HAP-1 (cell line): ENCODE measurements at regions of chr18 and their contacts with region 1.

Region 1: DNA sequence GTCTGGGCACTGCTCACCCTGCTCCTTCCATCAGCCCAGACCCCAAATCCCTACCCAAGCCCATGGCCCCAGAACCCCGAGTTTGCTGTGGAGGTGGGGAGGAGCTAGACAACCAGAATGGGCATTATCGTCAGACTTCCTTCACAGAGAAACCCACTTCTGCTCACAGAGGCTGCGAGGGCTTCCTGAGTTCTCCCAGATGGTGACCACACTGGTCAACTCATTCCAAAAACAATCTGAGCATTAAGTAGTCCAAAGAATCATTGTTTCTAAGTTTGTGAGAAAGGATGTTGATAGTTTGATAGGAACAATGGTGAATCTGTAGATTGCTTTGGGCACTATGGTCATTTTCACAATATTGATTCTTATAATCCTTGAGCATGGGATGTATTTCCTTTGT is 60.2 kb downstream of the LRRC30 start:
- DNase-seq: no peak
- H3K4me3 ChIP-seq: no peak overlapping the region
- H3K4me1 ChIP-seq: no peaks in the 10 kb centered on the region
- H3K27me3 ChIP-seq: no peaks in the 10 kb centered on the region

Region 2: DNA sequence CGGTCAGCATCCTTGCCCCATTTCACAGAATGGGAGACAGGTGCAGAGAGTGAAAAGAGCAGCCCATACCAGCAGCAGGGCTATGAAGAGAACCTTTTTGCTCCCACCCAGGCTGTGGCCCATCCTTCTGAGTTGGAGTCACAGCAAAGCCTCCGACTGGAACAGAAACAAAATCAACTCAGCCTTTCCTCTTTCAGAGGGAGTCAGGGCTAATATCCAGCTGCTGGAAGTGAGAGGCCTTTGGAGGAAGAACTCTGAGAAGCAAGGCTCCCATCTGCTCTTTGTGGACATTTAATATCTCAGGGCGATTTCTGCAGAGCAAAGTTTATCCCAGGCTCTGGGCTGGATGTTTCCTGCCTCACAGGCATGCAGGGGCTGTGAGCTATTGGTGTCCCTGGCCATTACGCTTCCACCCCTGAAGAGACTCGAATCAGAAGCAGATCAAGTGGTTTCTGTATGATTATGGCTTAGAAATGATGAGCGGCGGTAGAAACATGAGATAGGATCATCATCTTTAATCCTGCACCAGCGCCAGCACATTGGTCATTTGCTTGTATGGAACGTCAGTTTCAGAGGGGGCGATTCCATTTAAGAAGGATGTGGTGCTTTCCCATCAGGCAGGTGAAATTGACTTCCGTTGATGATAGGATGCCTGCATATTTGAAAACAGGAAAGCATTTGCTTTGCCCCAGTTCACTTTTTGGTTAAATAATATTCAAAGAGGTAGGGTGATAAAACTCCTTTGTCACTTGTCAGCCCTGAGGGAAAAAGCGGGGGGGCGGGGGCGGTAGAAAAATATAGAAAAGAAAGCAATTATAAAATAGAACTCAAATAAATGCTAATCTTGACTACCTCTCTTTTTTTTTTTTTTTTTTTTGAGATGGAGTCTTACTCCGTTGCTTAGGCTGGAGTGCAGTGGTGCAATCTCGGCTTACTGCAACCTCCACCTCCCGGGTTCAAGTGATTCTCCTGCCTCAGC is 92.2 kb after region 1 on chr18:
- in situ Hi-C with region 1: loop called (anchors 25 kb)
- DNase-seq: no peak
- H3K4me3 ChIP-seq: no peak overlapping the region
- H3K4me1 ChIP-seq: no peaks in the 10 kb centered on the region
- H3K27me3 ChIP-seq: no peaks in the 10 kb centered on the region